HEK293T (cell line): ENCODE measurements at regions of chr6 and their contacts with region 1.

Region 1: DNA sequence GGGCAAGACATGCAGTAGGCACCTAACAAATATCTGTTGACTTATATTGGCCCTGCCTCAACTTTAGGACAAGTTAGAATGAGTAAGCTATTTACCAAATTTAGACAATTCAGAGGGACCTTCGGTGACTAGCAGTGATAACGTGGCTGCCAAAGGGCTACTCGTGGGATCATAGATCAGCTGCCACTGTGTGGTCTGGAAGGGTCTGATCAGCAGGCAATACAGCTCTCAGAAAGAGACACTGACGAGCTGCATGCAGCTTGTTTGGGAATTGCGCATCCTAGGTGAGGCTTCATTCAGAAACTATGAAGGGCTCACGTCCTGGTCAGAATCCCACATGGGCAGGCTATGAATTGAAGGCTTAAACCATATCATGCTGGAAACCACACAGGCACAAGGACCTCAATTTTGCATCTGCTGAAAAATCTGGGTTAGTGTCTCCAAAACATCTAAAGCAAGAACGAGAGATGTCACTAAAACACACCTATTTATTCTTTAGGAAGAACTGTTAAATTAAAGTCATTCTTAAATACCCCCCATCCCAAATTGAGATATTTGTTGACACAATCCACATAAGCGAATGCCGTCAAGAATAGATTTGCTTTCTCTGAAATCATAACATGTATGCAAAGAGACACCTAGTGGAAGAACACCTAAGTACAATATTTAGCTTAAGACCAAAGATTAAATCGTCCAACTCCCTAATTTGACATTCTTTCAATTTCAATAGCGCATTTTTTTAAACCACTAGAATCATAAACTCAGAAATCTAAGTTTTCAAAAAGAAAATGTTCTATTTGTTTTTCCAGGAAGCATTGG is 79.6 kb downstream of the IPCEF1 start:
- DNase-seq: peak; percentile 47

Region 2: DNA sequence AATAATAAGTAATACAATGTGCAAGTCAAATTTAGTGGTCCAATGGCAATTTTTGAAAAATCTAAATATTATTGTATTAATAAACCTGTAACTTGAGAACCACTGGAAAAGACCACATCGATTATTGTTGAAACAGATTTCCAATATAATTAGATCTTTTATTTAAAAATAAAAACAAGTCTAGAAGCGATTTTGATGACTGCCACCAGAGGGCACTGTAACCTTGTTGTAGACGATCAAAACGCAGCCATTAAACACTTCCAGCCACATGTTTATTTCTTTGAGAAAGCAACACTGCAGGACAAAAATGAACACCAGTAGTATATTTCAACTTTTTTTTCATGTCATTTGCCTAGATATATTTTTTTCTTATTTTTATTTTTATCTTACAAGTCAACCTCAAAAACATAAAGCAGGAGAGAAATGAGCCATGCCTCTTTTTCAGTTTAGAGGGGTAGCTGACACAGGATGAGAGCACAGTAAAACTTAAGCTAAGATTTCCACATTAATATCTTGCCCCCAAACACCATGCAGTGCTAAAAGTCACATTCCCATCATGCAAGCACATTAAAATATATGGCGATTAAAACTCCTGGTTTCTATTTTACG is 122.6 kb before region 1 on chr6:
- CTCF ChIA-PET with region 1: interaction called, 25 read pairs
- POLR2A ChIA-PET with region 1: no interaction called
- DNase-seq: peak; percentile 55